Activated T-helper 2 cell treated with anti-CD3 and anti-CD28 coated beads, Interferon-gamma antibody, Interleukin-2, Interleukin-4, amounts not matched to agents 10 μg/mL and 5 μg/mL and 100 μg/mL, durations not matched to agents 14 hours and 24 hours and 36 hours (primary cell): ENCODE measurements at regions of chr4 and their contacts with region 1.

Region 1: DNA sequence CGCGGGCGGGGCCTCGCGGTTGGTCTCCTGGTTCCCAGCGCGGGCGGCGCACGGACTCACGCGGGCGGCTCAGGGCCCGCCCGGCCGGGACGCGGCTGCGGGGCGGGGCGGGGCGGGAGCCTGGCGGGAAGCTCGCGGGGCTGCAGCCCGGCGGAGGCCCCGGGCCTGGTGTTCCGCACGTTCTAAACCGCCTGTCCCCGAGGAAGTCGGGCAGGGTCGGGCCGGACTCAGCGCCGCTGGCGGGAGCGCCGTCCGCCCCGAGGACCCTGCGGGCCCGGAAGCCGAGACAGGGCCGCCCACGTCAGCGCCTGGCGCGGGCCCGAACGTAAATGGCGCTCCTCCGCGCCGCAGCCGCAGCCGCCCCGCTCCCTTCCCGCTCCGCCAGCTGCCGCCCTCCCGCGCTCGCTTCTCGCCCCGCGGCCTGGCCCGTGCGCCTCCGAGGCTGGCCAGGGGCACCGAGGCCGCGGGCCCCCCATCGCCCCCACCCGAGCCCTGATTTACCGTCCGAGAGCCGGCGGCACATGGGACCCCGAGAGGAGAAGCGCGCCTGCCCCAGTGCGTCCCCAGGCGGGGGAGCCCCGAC is 309 bp upstream of the CTBP1 start:
- DNase-seq: peak; percentile 83
- H3K4me3 Mint-ChIP-seq: peak overlapping the region; percentile 87
- H3K27ac Mint-ChIP-seq: peak overlapping the region; percentile 96
- H3K4me1 Mint-ChIP-seq: peaks cover 29% of the 10 kb centered on the region
- H3K27me3 Mint-ChIP-seq: no peaks in the 10 kb centered on the region

Region 2: GRCh38 chr4:1200425-1201035 is 48.7 kb before region 1 on chr4:
- intact Hi-C with region 1: loop called (anchors 1 kb)
- DNase-seq: no peak
- H3K4me3 Mint-ChIP-seq: peak overlapping the region; percentile 65
- H3K27ac Mint-ChIP-seq: peak overlapping the region; percentile 98
- H3K4me1 Mint-ChIP-seq: peaks cover 45% of the 10 kb centered on the region
- H3K27me3 Mint-ChIP-seq: no peaks in the 10 kb centered on the region

Region 3: GRCh38 chr4:1266881-1267763 is 17.9 kb after region 1 on chr4:
- intact Hi-C with region 1: loop called (anchors 2 kb)
- DNase-seq: no peak
- H3K4me3 Mint-ChIP-seq: peak overlapping the region; percentile 66
- H3K27ac Mint-ChIP-seq: peak overlapping the region; percentile 91
- H3K4me1 Mint-ChIP-seq: peaks cover 25% of the 10 kb centered on the region
- H3K27me3 Mint-ChIP-seq: no peaks in the 10 kb centered on the region

Region 4: GRCh38 chr4:1289207-1290164 is 40.2 kb after region 1 on chr4 and contains the start of gene MAEA:
- intact Hi-C with region 1: loop called (anchors 5 kb)
- DNase-seq: peak; percentile 98
- H3K4me3 Mint-ChIP-seq: peak within 1 kb of the TSS; percentile 97
- H3K27ac Mint-ChIP-seq: peak within 1 kb of the TSS; percentile 90
- H3K4me1 Mint-ChIP-seq: peaks cover 23% of the 10 kb centered on the region
- H3K27me3 Mint-ChIP-seq: no peaks in the 10 kb centered on the region
- total RNA-seq, gene MAEA: 59.2 and 62.8 TPM in 2 replicates

Region 5: GRCh38 chr4:1683736-1684505 is 434.7 kb after region 1 on chr4 and contains the start of gene FAM53A:
- intact Hi-C with region 1: loop called (anchors 5 kb)
- DNase-seq: peak; percentile 89
- H3K4me3 Mint-ChIP-seq: peak within 1 kb of the TSS; percentile 77
- H3K27ac Mint-ChIP-seq: peak within 1 kb of the TSS; percentile 76
- H3K4me1 Mint-ChIP-seq: peaks cover 11% of the 10 kb centered on the region
- H3K27me3 Mint-ChIP-seq: no peaks in the 10 kb centered on the region
- total RNA-seq, gene FAM53A: 2.7 and 3.3 TPM in 2 replicates